Lower lobe of right lung (tissue), 2 donors: ENCODE measurements at regions of chr9 and their contacts with region 1.

Region 1: DNA sequence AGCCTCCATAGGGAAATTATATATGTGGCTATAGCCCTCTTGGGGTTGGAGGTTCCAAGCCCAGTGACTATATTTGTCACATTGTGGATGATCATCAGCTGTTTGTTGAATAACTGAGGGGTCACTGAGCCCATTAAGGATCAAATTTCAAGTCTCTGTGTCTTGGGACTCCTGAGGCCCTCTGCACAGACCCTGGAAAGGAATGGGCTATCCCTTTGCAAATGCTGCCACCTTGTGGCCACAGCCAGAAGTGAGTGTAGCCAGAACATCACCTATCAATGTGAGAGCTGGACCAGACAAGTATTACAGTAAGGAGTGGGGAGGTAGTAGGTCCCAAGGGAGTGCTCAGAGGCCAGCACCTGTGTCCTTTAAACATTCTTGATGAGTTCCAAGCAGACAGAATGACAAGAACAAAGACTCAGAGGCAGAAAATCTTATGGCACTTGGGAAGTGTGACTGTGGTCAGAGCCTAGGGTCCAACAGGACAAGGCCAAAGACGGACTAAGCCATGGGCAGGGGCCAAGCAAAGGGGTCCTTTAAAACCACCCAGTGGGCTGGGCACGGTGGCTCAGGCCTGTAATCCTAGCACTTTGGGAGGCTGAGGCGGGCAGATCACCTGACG is 8.2 kb downstream of the RPP25L start:
- DNase-seq: peak; percentile 81
- ATAC-seq: peak; percentile 89 to 92
- H3K4me3 ChIP-seq: no peak overlapping the region
- H3K27ac ChIP-seq: no peak overlapping the region
- H3K4me1 ChIP-seq: no peaks in the 10 kb centered on the region
- H3K27me3 ChIP-seq: no peaks in the 10 kb centered on the region
- CTCF ChIP-seq: peak; percentile 94

Region 2: DNA sequence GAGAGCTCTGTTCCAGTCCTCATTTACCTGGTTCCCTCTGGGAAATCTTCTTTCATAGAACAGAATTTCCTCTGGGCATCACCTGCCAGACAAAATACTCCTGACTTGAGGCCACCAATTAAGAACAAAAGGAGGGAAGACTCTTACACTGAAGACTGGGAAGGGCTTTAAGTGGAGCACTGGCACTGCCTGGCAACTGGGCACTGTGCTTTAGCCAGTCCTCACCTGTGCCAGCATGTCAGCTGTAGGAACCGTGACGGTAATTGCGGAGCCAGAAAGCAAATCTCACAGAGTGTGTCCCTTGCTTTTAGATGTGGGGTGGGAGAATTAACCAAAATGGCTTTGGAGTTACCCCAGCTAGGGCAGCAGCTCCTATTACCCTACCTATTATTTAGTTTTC is 186.0 kb before region 1 on chr9:
- intact Hi-C with region 1: no loop called
- DNase-seq: no peak
- ATAC-seq: no peak
- H3K4me3 ChIP-seq: no peak overlapping the region
- H3K27ac ChIP-seq: no peak overlapping the region
- H3K4me1 ChIP-seq: no peaks in the 10 kb centered on the region
- H3K27me3 ChIP-seq: no peaks in the 10 kb centered on the region
- CTCF ChIP-seq: no peak

Region 3: DNA sequence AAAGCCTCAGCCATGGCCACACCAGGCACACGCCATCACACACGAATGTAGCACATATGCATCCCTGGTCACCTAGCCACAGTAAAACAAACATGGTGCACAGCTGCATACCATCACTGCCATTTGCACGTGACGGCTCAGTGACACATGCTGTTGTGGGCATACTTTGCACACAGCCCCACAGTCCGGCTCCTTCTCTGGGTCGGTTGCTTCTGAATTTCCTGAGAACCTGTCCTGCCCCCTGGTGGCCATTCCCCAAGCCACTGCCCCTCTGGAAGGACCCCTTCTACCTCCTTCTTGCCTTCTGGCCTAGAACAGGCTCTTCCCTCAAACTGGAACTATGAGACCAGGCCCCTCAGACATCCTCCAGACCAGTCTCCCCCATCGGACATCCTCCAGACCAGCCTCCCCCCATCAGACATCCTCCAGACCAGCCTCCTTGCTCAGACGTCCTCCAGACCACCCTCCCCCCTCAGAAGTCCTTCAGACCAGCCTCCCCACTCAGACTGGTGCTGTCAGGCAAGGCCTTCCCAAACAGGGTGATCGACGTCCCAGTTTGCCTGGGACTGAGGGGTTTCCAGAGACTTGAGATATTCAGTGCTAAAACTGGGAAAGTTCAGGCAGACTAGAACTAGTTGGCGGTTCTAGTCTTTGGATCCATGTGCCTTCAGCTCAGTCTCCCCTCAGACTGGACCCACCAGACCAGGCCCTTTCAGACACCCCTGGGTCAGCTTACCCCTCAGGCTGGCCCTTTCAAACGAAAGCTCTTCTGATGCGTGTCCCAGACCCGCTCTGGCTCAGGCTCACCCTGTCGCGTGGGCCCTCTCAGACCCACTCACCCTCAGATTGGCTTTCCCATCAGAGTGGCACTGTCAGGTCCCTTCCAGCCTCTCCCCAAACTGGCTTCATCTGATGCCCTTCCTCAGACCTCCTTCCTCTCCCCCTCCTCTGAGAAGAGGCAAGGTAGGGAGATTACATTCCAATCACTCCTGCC is 56.6 kb before region 1 on chr9:
- intact Hi-C with region 1: loop called (anchors 10 kb)
- DNase-seq: no peak
- ATAC-seq: peak; percentile 80
- H3K4me3 ChIP-seq: no peak overlapping the region
- H3K27ac ChIP-seq: no peak overlapping the region
- H3K4me1 ChIP-seq: no peaks in the 10 kb centered on the region
- H3K27me3 ChIP-seq: peaks cover 9% of the 10 kb centered on the region
- CTCF ChIP-seq: peak; percentile 64

Region 4: DNA sequence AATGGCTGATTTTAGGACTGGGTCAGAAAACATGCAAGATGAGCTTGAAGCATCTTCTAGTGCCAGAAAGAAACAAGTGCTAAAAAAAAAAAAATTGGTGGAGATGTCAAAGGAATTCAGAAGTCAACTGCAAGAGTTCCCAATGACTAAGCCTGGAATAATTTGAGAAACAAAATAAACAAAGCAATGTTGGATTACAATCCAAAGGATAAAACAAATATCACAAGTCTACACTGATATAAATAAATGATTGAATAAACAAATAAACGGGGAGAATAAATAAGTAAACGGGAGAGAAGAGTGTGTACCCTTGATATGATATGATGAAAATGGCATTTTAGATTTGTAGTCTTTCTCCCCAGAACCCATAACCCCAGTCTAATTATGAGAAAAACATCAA is 169.6 kb after region 1 on chr9:
- intact Hi-C with region 1: no loop called
- DNase-seq: no peak
- ATAC-seq: no peak
- H3K4me3 ChIP-seq: no peak overlapping the region
- H3K27ac ChIP-seq: no peak overlapping the region
- H3K4me1 ChIP-seq: no peaks in the 10 kb centered on the region
- H3K27me3 ChIP-seq: no peaks in the 10 kb centered on the region
- CTCF ChIP-seq: no peak